CD14-positive monocyte (primary cell): ENCODE measurements at regions of chr13 and their contacts with region 1.

Region 1: DNA sequence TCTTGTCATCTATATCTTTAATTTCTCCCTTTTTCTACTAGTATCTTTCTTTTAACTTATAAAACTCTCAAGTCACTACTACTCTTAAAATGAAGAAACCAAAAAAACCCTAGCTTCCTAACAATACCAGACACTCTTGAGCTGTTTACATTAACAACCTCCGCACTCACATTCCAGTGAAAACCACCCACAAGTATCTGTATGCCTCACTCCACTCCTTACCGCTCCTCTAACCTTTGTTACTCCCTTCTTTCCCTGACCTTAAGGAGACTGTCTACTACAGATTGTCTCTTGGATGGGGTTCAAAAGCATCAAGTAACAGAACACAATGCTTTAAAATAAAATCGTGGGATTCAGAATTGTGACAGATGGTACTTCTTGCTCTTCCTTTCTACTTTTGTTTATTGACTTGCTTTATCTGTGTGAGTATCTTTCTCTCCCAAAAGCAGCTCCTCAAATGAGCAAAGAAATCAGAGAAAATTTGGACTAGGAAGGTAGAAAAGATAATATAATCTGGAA is 110.0 kb upstream of the FBXL3 start:
- DNase-seq: no peak
- H3K4me3 ChIP-seq: no peak overlapping the region
- H3K4me3 Mint-ChIP-seq: no peak overlapping the region
- H3K27ac ChIP-seq: no peak overlapping the region
- H3K27ac Mint-ChIP-seq: peak overlapping the region in 4 of 7 donors; percentile 6 to 57 (median 37)
- H3K4me1 ChIP-seq: no peaks in the 10 kb centered on the region
- H3K4me1 Mint-ChIP-seq: no peaks in the 10 kb centered on the region
- H3K27me3 ChIP-seq: no peaks in the 10 kb centered on the region
- H3K27me3 Mint-ChIP-seq: no peaks in the 10 kb centered on the region
- CTCF ChIP-seq: no peak

Region 2: GRCh38 chr13:77196052-77196618 is 59.2 kb after region 1 on chr13:
- intact Hi-C with region 1: loop called in 1 of 2 experiments (anchors 10 kb)
- DNase-seq: no peak
- H3K4me3 ChIP-seq: no peak overlapping the region
- H3K4me3 Mint-ChIP-seq: no peak overlapping the region
- H3K27ac ChIP-seq: no peak overlapping the region
- H3K27ac Mint-ChIP-seq: no peak overlapping the region
- H3K4me1 ChIP-seq: no peaks in the 10 kb centered on the region
- H3K4me1 Mint-ChIP-seq: no peaks in the 10 kb centered on the region
- H3K27me3 ChIP-seq: no peaks in the 10 kb centered on the region
- H3K27me3 Mint-ChIP-seq: peaks cover 0 to 2% (median 0%) of the 10 kb centered on the region in 3 donors
- CTCF ChIP-seq: no peak